ENCODE measurements at regions of chr1 and their contacts with region 1.

Region 1: GRCh38 chr1:99808391-99809115 is 41.6 kb upstream of the AGL start:
- DNase-seq: peak; percentile 93
- H3K4me3 ChIP-seq: peak overlapping the region; percentile 5
- H3K27ac ChIP-seq: no peak overlapping the region
- H3K4me1 ChIP-seq: peaks cover 6% of the 10 kb centered on the region
- H3K27me3 ChIP-seq: peaks cover 8% of the 10 kb centered on the region
- CTCF ChIP-seq: peak; percentile 73

Region 2: DNA sequence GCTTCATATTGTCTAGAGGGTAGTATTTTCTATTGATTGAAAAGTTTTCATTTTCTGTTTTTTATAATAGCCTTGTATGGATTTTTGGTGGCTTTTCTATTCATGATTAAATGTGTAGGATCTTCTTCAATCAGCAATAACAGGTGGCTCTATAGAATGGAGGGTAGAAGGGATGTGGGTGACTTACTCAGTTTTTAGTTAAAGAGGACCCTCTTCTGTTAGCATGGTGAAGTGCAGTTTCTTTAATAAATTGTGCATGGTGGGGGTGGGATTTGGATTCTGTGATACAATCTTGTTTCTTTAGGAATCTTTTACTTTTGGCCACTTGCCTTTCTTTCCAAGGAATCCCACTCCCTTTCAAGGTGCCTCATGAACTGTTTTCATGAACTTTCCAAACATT is 225.9 kb after region 1 on chr1:
- CTCF ChIA-PET with region 1: no interaction called
- POLR2A ChIA-PET with region 1: no interaction called
- intact Hi-C with region 1: loop called (anchors 1 kb)
- DNase-seq: peak; percentile 62
- H3K4me3 ChIP-seq: no peak overlapping the region
- H3K27ac ChIP-seq: no peak overlapping the region
- H3K4me1 ChIP-seq: peaks cover 5% of the 10 kb centered on the region
- H3K27me3 ChIP-seq: no peaks in the 10 kb centered on the region
- CTCF ChIP-seq: peak; percentile 65

Region 3: GRCh38 chr1:100132566-100133477 is 324.3 kb after region 1 on chr1 and contains the starts of genes SASS6 and TRMT13:
- CTCF ChIA-PET with region 1: no interaction called
- POLR2A ChIA-PET with region 1: no interaction called
- intact Hi-C with region 1: loop called (anchors 2 kb)
- DNase-seq: peak; percentile 99
- H3K4me3 ChIP-seq: peak within 1 kb of the TSS; percentile 93
- H3K27ac ChIP-seq: peak within 1 kb of the TSS; percentile 82
- H3K4me1 ChIP-seq: peaks cover 20% of the 10 kb centered on the region
- H3K27me3 ChIP-seq: no peaks in the 10 kb centered on the region
- CTCF ChIP-seq: no peak
- total RNA-seq, gene SASS6: 15.1 and 16.8 TPM in 2 replicates
- total RNA-seq, gene TRMT13: 19.0 and 23.3 TPM in 2 replicates

Region 4: GRCh38 chr1:100358210-100358609 is 549.7 kb after region 1 on chr1:
- CTCF ChIA-PET with region 1: no interaction called
- POLR2A ChIA-PET with region 1: no interaction called
- intact Hi-C with region 1: no loop called
- DNase-seq: peak; percentile 37
- H3K4me3 ChIP-seq: no peak overlapping the region
- H3K27ac ChIP-seq: no peak overlapping the region
- H3K4me1 ChIP-seq: peaks cover 57% of the 10 kb centered on the region
- H3K27me3 ChIP-seq: no peaks in the 10 kb centered on the region
- CTCF ChIP-seq: peak; percentile 64

Region 5: DNA sequence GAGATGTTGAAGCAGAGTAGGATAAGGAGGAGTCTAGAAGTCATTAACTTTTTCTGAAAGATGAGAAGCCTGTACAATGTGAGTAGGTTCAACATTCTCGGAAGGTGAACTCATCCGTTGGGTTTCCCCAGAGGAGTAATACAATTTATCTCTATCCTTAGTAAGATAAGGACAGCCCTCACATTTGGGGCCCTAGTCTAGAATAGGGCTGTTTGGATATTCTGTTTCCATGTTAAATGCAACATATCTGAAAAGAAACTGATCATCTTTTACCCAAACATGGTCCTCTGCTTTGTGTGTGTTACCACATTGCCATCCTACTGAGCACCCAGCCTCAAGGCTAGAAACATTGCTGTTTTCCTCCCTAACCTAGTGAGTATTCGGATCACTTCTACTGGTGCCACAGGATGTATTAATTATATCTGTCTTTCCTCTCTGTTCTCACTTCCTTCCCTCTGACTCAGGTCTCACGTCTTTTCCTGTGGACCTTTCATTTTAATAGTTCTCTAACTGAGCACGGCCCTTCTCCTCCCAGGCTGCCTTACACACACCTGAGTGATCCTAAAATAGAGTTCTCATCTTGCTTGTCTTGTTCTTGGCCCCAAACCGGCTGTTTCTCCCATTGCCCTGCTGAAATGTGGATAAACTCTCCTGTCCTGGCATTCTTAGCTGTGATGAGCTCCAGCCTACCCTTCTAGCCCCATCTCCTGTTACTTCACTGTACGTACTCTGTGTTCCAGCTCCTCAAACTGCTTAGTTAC is 635.4 kb after region 1 on chr1:
- CTCF ChIA-PET with region 1: no interaction called
- POLR2A ChIA-PET with region 1: no interaction called
- intact Hi-C with region 1: loop called (anchors 5 kb)
- DNase-seq: no peak
- H3K4me3 ChIP-seq: no peak overlapping the region
- H3K27ac ChIP-seq: no peak overlapping the region
- H3K4me1 ChIP-seq: no peaks in the 10 kb centered on the region
- H3K27me3 ChIP-seq: no peaks in the 10 kb centered on the region
- CTCF ChIP-seq: 0 out of 2 replicates have a peak, but pooled peaks have one; percentile 9

Region 6: GRCh38 chr1:100866041-100866900 is 1057.7 kb after region 1 on chr1:
- CTCF ChIA-PET with region 1: no interaction called
- POLR2A ChIA-PET with region 1: no interaction called
- intact Hi-C with region 1: loop called (anchors 2 kb)
- DNase-seq: peak; percentile 40
- H3K4me3 ChIP-seq: no peak overlapping the region
- H3K27ac ChIP-seq: no peak overlapping the region
- H3K4me1 ChIP-seq: no peaks in the 10 kb centered on the region
- H3K27me3 ChIP-seq: no peaks in the 10 kb centered on the region
- CTCF ChIP-seq: peak; percentile 68

Measured in A673 (cell line).